Activated T-helper 1 cell treated with anti-CD3 and anti-CD28 coated beads, Interleukin-12 subunit alpha, Interleukin-12 subunit beta, Interleukin-2, Interleukin-4 antibody, amounts not matched to agents 30 ng/mL and 10 ng/mL and 1 ng/mL, durations not matched to agents 14 hours and 24 hours and 36 hours (primary cell): ENCODE measurements at regions of chrX and their contacts with region 1.

Region 1: DNA sequence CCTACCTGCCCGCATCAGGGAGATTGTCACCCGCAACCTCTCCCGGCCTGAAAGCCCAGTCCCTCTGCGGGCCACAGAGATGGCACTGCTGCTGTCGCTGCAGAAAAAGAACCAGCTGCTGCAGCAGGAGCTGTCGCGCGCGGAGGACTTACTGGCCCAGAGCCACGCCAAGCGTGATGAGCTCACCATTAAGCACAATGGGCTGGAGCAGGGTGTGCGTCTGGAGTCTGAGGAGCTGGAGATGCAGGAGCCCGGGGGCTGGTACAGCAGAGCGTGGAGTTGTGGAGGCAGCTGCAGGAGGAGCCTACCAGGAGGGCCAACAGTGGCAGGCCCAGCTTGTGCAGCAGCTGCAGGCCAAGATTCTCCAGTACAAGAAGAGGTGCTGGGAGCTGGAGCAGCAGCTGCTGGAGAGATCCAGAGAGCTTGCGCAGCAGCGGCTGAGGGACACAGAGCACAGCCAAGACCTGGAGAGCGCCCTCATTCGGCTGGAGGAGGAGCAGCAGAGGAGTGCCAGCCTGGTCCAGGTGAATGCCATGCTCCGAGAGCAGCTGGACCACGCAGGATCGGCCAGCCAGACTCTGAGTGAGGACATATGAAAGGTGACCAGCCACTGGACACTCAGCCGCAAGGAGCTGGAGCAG is 11.3 kb downstream of the SMIM10L2A start:
- DNase-seq: no peak
- H3K4me3 Mint-ChIP-seq: no peak overlapping the region
- H3K27ac Mint-ChIP-seq: no peak overlapping the region
- H3K4me1 Mint-ChIP-seq: peaks cover 10% of the 10 kb centered on the region
- H3K27me3 Mint-ChIP-seq: peaks cover 5% of the 10 kb centered on the region

Region 2: DNA sequence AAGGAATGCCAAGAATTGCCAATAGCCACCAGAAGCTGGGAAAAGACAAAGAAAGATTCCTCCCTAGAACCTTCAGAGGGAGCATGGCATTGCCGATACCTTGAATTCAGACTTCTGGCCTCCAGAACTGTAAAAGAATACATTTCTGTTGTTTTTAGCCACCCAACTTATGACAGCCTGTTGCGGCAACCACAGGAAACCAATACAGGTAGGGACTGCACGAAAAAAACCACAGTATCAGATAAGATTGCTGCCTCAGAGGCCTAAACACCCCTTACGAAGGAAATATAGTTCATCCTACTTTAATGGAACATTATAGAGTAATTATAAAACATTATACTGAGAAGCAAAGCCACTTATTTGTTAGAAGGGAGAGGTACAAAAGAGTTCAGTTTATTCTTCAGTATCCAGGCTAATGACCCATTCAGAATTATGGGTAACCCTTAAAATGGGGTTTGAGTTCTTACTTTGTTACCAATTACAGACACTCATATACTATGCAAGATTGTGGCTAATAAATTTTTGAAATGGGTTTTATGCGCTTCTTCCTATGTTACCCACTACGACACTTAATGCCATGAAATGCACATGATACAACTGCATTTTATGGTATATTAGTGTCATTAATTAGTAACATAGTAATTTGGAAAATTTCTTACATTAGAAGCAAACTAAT is 48.7 kb before region 1 on chrX:
- intact Hi-C with region 1: loop called (anchors 2 kb)
- DNase-seq: peak; percentile 49
- H3K4me3 Mint-ChIP-seq: peak overlapping the region; percentile 69
- H3K27ac Mint-ChIP-seq: peak overlapping the region; percentile 85
- H3K4me1 Mint-ChIP-seq: peaks cover 36% of the 10 kb centered on the region
- H3K27me3 Mint-ChIP-seq: no peaks in the 10 kb centered on the region